Activated naive CD4-positive, alpha-beta T cell treated with anti-CD3 and anti-CD28 coated beads for 36 hours (primary cell): ENCODE measurements at regions of chr11 and their contacts with region 1.

Region 1: GRCh38 chr11:124800226-124800929 is at the start of gene MSANTD2:
- DNase-seq: peak; percentile 82
- H3K4me3 Mint-ChIP-seq: peak within 1 kb of the TSS; percentile 85
- H3K27ac Mint-ChIP-seq: peak within 1 kb of the TSS; percentile 92
- H3K4me1 Mint-ChIP-seq: peaks cover 32% of the 10 kb centered on the region
- H3K27me3 Mint-ChIP-seq: no peaks in the 10 kb centered on the region
- total RNA-seq, gene MSANTD2: 3.8 to 4.2 TPM

Region 2: GRCh38 chr11:124622531-124623451 is 177.6 kb before region 1 on chr11 and contains the start of gene TBRG1:
- CTCF ChIA-PET with region 1: no interaction called
- intact Hi-C with region 1: loop called (anchors 1 kb)
- DNase-seq: peak; percentile 88
- H3K4me3 Mint-ChIP-seq: peak within 1 kb of the TSS; percentile 96
- H3K27ac Mint-ChIP-seq: peak within 1 kb of the TSS; percentile 96
- H3K4me1 Mint-ChIP-seq: peaks cover 22% of the 10 kb centered on the region
- H3K27me3 Mint-ChIP-seq: no peaks in the 10 kb centered on the region
- total RNA-seq, gene TBRG1: 28.3 to 28.6 TPM

Region 3: DNA sequence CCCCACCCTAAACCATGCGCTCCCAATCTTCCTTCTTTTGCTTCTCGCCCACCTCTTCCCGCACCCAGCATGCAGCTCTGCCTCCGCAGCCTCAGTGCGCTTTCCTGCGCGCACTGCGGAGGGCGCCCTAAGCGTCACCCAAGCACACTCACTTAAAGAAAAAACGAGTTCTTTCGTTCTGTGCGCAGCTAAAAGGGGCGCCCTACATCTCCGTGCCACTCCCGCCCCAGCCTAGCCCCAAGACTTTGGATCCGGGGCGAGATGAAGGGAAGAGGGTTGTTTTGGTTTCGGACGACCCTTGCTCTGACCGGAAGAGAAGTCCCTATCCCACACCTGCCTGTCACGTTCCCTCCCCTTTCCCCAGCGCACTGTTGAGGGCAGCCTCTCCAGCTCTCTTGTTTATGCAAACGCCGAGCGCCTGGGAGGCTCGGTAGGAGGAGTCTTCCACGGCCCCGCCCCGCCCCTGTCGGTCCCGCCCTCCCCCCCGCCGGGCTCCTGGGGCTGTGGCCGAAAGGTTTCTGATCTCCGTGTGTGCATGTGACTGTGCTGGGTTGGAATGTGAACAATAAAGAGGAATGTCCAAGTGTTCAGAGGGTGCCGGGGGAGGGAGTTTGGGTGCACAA is 53.6 kb before region 1 on chr11:
- CTCF ChIA-PET with region 1: interaction called, 6 read pairs
- intact Hi-C with region 1: loop called (anchors 1 kb)
- DNase-seq: peak; percentile 76
- H3K4me3 Mint-ChIP-seq: peak overlapping the region; percentile 83
- H3K27ac Mint-ChIP-seq: peak overlapping the region; percentile 75
- H3K4me1 Mint-ChIP-seq: peaks cover 14% of the 10 kb centered on the region
- H3K27me3 Mint-ChIP-seq: no peaks in the 10 kb centered on the region

Region 4: DNA sequence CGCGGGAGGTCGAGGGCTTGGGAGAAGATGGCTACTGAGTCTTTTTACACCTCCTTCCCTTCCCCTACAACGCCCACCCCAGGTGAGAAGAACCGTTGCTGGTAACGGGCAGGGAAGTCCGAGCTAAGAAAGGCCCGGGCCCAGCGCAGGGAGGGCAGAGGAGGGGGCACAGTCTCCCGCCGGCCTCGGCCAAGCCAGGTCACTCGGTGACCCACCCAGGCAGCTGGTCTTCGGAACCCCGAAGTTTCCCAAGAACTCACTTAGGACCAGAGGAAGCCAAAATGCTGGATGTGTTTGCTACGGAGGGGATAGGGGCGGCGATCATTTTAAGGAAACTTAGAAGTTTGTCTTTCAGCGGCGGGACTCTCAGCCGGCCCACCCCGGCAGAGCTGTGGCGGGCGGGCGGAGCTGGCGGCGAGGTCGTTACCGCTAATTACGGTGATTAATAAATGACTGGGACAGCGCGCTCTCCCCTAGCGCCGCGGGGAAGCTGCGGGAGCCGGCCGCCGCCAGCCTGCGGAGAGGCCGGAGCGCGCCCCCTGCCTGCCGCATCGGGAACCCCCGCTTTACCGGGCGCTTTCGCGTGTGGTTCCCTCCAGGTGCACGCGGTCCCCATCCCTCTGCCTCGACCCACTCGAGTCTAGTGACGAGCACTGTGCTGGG is 65.7 kb after region 1 on chr11:
- CTCF ChIA-PET with region 1: no interaction called
- intact Hi-C with region 1: loop called (anchors 2 kb)
- DNase-seq: peak; percentile 62
- H3K4me3 Mint-ChIP-seq: peak overlapping the region; percentile 42
- H3K27ac Mint-ChIP-seq: no peak overlapping the region
- H3K4me1 Mint-ChIP-seq: peaks cover 37% of the 10 kb centered on the region
- H3K27me3 Mint-ChIP-seq: peaks cover 92% of the 10 kb centered on the region

Region 5: GRCh38 chr11:124900464-124900863 is 100.1 kb after region 1 on chr11:
- CTCF ChIA-PET with region 1: no interaction called
- intact Hi-C with region 1: no loop called
- DNase-seq: no peak
- H3K4me3 Mint-ChIP-seq: no peak overlapping the region
- H3K27ac Mint-ChIP-seq: no peak overlapping the region
- H3K4me1 Mint-ChIP-seq: peaks cover 6% of the 10 kb centered on the region
- H3K27me3 Mint-ChIP-seq: peaks cover 10% of the 10 kb centered on the region

Region 6: GRCh38 chr11:124920870-124921609 is 120.7 kb after region 1 on chr11:
- CTCF ChIA-PET with region 1: no interaction called
- intact Hi-C with region 1: loop called (anchors 2 kb)
- DNase-seq: peak; percentile 83
- H3K4me3 Mint-ChIP-seq: peak overlapping the region; percentile 55
- H3K27ac Mint-ChIP-seq: no peak overlapping the region
- H3K4me1 Mint-ChIP-seq: peaks cover 22% of the 10 kb centered on the region
- H3K27me3 Mint-ChIP-seq: no peaks in the 10 kb centered on the region